ENCODE measurements at regions of chr19 and their contacts with region 1.

Region 1: GRCh38 chr19:11035441-11036377 is 53.6 kb upstream of the LDLR start:
- DNase-seq: peak; percentile 80 to 92
- ATAC-seq: peak; percentile 74 to 88 (median 86)
- H3K4me3 ChIP-seq: no peak overlapping the region
- H3K4me3 Mint-ChIP-seq: no peak overlapping the region
- H3K27ac ChIP-seq: no peak overlapping the region
- H3K27ac Mint-ChIP-seq: peak overlapping the region in 1 of 2 donors; percentile 47
- H3K4me1 ChIP-seq: peaks cover 27% of the 10 kb centered on the region
- H3K4me1 Mint-ChIP-seq: peaks cover 18 to 20% of the 10 kb centered on the region in 2 donors
- H3K27me3 ChIP-seq: no peaks in the 10 kb centered on the region
- H3K27me3 Mint-ChIP-seq: no peaks in the 10 kb centered on the region
- CTCF ChIP-seq: peak; percentile 88

Region 2: DNA sequence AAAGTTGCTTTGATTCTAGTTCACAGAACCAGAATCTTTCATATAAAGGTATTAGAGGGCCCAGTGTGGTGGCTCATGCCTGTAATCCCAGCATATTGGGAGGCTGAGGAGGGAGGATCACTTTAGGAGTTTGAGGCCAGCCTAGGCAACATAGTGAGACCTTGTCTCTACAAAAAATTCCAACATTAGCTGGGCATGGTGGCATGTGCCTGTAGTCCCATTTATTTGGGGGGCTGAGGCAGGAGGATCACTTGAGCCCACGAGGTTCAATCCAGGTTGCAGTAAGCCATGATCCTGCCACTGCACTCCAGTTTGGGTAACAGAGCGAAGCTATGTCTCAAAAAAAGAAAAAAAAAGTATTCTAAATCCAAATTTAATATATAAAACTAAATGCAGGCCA is 62.6 kb after region 1 on chr19:
- intact Hi-C with region 1: loop called (anchors 2 kb)
- DNase-seq: no peak
- ATAC-seq: no peak
- H3K4me3 ChIP-seq: no peak overlapping the region
- H3K4me3 Mint-ChIP-seq: no peak overlapping the region
- H3K27ac ChIP-seq: peak overlapping the region; percentile 2
- H3K27ac Mint-ChIP-seq: peak overlapping the region; percentile 91 to 97
- H3K4me1 ChIP-seq: peaks cover 48% of the 10 kb centered on the region
- H3K4me1 Mint-ChIP-seq: peaks cover 32 to 34% of the 10 kb centered on the region in 2 donors
- H3K27me3 ChIP-seq: no peaks in the 10 kb centered on the region
- H3K27me3 Mint-ChIP-seq: no peaks in the 10 kb centered on the region
- CTCF ChIP-seq: no peak

Region 3: GRCh38 chr19:11203194-11204075 is 167.7 kb after region 1 on chr19:
- intact Hi-C with region 1: loop called (anchors 2 kb)
- DNase-seq: peak in 1 of 2 donors; percentile 54
- ATAC-seq: peak in 2 of 3 donors; percentile 32 to 40
- H3K4me3 ChIP-seq: no peak overlapping the region
- H3K4me3 Mint-ChIP-seq: no peak overlapping the region
- H3K27ac ChIP-seq: no peak overlapping the region
- H3K27ac Mint-ChIP-seq: peak overlapping the region in 1 of 2 donors; percentile 18
- H3K4me1 ChIP-seq: no peaks in the 10 kb centered on the region
- H3K4me1 Mint-ChIP-seq: peaks cover 0 to 14% of the 10 kb centered on the region in 2 donors
- H3K27me3 ChIP-seq: no peaks in the 10 kb centered on the region
- H3K27me3 Mint-ChIP-seq: peaks cover 0 to 9% of the 10 kb centered on the region in 2 donors
- CTCF ChIP-seq: peak; percentile 58

Measured in natural killer cell (primary cell).